Heart right ventricle (tissue), 16 donors: ENCODE measurements at regions of chr3 and their contacts with region 1.

Region 1: DNA sequence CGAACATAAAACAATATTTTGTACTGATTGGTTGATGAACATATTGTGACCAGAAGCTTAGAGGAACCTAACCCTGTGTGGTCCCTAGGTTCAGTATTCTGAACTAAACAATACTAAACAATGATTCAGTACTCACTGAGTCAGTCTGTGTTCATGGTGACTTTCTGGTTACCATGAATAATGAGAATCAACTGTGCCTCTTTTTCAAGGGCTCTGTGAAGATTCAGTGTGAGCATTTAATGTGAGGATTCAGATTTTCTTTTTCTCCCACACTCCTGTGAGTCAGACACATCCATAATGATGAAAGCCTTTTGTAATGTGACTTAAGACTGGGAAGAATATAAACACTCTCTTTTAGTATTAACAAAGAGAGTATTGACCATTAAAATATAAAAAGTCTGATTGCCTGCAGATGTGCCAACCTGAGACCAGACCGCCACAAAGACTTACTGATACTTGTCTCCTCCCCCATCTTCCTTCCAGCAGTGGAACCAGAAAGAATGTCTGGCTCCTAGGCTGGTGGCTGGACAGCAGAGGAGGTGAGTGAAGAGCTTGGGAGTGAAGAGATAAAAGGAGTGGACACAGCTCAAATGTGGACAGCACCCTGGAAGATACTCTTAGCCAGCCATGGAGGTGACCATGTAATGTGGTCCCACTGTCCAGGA is 17.6 kb upstream of the ACTL6A start:
- DNase-seq: no peak
- ATAC-seq: no peak
- H3K4me3 ChIP-seq: no peak overlapping the region
- H3K27ac ChIP-seq: no peak overlapping the region
- H3K4me1 ChIP-seq: no peaks in the 10 kb centered on the region
- H3K27me3 ChIP-seq: no peaks in the 10 kb centered on the region
- CTCF ChIP-seq: no peak

Region 2: GRCh38 chr3:179421500-179421899 is 123.6 kb before region 1 on chr3:
- intact Hi-C with region 1: loop called in 1 of 10 experiments (anchors 5 kb)
- DNase-seq: peak in 1 of 2 donors; percentile 53
- ATAC-seq: peak; percentile 64 to 92 (median 82)
- H3K4me3 ChIP-seq: no peak overlapping the region
- H3K27ac ChIP-seq: peak overlapping the region in 4 of 10 donors; percentile 2 to 51 (median 22)
- H3K4me1 ChIP-seq: peaks cover 0 to 13% (median 10%) of the 10 kb centered on the region in 9 donors
- H3K27me3 ChIP-seq: no peaks in the 10 kb centered on the region
- CTCF ChIP-seq: peak; percentile 51 to 84 (median 68)

Region 3: GRCh38 chr3:179464323-179465089 is 80.6 kb before region 1 on chr3:
- intact Hi-C with region 1: loop called in 1 of 10 experiments (anchors 10 kb)
- DNase-seq: no peak
- ATAC-seq: no peak
- H3K4me3 ChIP-seq: no peak overlapping the region
- H3K27ac ChIP-seq: no peak overlapping the region
- H3K4me1 ChIP-seq: peaks cover 0 to 16% (median 0%) of the 10 kb centered on the region in 9 donors
- H3K27me3 ChIP-seq: no peaks in the 10 kb centered on the region
- CTCF ChIP-seq: no peak

Region 4: DNA sequence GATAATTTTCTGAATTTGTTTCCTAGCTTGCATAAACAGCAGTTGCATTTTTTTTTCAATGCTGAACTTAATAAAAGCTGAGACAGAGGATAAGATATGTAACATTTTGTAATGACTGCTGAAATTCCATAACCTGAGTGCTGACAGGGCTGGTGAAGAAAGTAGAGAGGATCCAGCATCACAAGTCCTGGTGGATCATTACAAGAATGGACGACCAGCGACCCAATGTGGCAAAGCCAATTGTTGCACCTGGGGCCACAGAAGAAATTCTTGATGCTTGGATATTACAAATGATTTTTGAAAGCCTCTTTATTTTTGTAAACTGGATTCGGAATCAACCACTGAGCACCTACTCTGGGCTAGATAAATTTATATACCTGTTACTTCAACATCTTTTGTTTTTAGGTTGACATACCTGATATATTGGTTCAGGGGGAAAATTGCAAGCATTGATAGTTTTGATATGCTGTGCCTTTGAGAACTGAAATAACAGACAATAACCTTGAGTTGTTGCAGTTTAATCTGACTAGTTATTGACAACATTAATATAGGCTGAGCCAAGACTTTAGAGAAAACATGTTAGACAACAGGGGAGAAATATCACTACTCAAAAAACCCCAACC is 13.7 kb after region 1 on chr3:
- intact Hi-C with region 1: no loop called
- DNase-seq: peak; percentile 39 to 76
- ATAC-seq: no peak
- H3K4me3 ChIP-seq: no peak overlapping the region
- H3K27ac ChIP-seq: no peak overlapping the region
- H3K4me1 ChIP-seq: peaks cover 0 to 17% (median 4%) of the 10 kb centered on the region in 9 donors
- H3K27me3 ChIP-seq: no peaks in the 10 kb centered on the region
- CTCF ChIP-seq: peak; percentile 78 to 95 (median 87)

Region 5: GRCh38 chr3:179589143-179589542 is 44.0 kb after region 1 on chr3:
- intact Hi-C with region 1: no loop called
- DNase-seq: no peak
- ATAC-seq: peak in 1 of 8 donors; percentile 35
- H3K4me3 ChIP-seq: no peak overlapping the region
- H3K27ac ChIP-seq: no peak overlapping the region
- H3K4me1 ChIP-seq: peaks cover 0 to 25% (median 4%) of the 10 kb centered on the region in 9 donors
- H3K27me3 ChIP-seq: no peaks in the 10 kb centered on the region
- CTCF ChIP-seq: no peak

Region 6: GRCh38 chr3:179706233-179706632 is 161.1 kb after region 1 on chr3:
- intact Hi-C with region 1: no loop called
- DNase-seq: no peak
- ATAC-seq: peak in 5 of 8 donors; percentile 13 to 50 (median 41)
- H3K4me3 ChIP-seq: no peak overlapping the region
- H3K27ac ChIP-seq: peak overlapping the region in 3 of 10 donors; percentile 23 to 58 (median 34)
- H3K4me1 ChIP-seq: peaks cover 0 to 47% (median 4%) of the 10 kb centered on the region in 9 donors
- H3K27me3 ChIP-seq: no peaks in the 10 kb centered on the region
- CTCF ChIP-seq: no peak